ENCODE measurements at regions of chr14 and their contacts with region 1.

Region 1: DNA sequence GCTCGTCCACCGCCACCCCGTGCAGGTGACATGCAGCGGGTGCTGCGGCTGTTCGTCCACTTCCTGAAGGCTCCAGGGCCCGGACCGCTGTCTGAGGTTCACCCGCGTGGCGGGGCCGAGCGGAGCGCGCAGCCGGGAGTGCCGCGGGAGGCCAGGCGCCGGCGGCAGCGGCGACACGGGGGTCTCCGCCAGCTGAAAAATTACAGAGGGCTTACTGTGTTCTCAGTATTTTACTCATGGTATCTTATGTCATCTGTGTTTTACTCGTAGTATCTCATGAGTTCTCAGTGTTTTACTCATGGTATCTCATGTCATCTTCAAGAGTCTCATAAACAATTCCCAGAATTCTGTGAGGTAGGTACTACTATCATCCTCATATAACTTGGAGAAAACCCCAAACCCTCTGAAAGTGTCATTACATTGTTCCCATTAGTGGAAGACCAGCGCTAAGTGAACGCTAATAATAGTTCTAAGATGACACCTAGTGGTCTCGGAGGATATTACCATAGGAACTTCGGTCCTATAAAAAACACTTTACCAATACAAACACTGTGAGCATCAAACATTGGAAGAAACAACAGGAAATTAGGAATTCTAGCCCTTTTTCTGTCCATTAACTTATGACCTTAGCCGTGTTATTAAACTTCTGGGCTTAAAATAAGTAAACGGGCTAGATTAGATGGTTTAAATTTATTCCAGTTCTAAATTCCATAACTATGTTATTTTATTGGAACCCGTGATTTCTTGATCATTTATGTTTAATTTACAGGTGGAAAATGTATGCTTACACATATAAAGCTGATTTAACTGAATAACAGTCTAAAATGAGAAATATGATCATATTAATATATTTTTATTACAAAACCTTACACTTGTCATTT is 32.4 kb downstream of the AK7 start:
- DNase-seq: peak; percentile 89
- ATAC-seq: peak; percentile 92
- H3K4me3 ChIP-seq: peak overlapping the region; percentile 71
- H3K27ac ChIP-seq: no peak overlapping the region
- H3K4me1 ChIP-seq: no peaks in the 10 kb centered on the region
- H3K27me3 ChIP-seq: no peaks in the 10 kb centered on the region; the same call in 1 of the 2 replicates
- CTCF ChIP-seq: peak; percentile 92

Region 2: GRCh38 chr14:96297000-96297399 is 127.3 kb before region 1 on chr14:
- CTCF ChIA-PET with region 1: no interaction called
- POLR2A ChIA-PET with region 1: no interaction called
- intact Hi-C with region 1: loop called (anchors 1 kb)
- DNase-seq: peak; percentile 40
- ATAC-seq: peak; percentile 63; the same call in 1 of the 2 replicates
- H3K4me3 ChIP-seq: no peak overlapping the region
- H3K27ac ChIP-seq: no peak overlapping the region
- H3K4me1 ChIP-seq: no peaks in the 10 kb centered on the region
- H3K27me3 ChIP-seq: no peaks in the 10 kb centered on the region
- CTCF ChIP-seq: peak; percentile 51

Measured in PC-3 (cell line).